Activated CD4-positive, alpha-beta memory T cell treated with anti-CD3 and anti-CD28 coated beads for 36 hours (primary cell): ENCODE measurements at regions of chr10 and their contacts with region 1.

Region 1: DNA sequence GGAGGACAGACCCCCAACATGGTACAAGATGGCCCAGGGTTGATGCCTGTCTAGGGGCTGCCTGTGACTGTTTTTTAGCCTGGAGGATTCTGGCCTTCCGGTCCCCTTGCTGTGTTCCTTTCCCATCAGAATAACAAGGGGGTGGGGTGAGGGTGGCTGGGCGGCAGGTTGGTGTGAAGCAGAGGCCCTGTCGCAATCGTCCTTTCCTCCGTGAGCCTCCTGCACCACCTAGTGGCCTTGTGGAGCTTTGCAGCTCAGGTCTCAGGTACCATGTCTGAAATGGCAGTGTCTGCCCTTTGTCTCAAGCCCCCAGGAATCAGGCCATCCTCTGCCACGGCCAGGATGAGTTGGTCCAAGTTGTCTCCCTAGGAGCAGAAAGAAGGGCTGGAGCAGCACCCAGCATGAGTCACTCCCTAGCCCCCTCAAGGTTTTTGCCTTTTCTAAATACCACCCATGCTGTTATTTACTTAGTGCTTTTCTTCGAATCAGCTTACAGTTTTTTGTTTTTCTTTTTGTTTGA is 24.2 kb downstream of the TACR2 start:
- DNase-seq: peak; percentile 89
- H3K4me3 Mint-ChIP-seq: no peak overlapping the region
- H3K27ac Mint-ChIP-seq: peak overlapping the region; percentile 67
- H3K4me1 Mint-ChIP-seq: peaks cover 11% of the 10 kb centered on the region
- H3K27me3 Mint-ChIP-seq: no peaks in the 10 kb centered on the region

Region 2: DNA sequence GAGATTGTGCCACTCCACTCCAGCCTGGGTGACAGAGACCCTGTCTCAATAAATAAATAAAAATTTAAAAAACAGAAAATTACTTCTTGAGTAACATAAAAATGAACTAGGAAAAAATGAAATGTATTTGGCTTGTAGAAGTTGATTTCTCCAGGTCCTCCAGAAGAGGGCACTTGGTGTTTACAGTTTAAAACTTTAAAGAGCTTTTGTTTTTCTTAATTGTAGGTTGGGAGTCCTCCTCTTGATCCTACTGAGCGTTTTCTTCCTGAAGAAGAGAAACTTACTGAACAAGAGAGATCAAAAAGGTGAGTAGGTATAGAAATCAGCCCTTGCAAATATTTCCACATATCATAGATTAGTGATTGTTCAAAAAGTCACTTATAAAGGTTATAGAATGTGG is 387.7 kb before region 1 on chr10:
- CTCF ChIA-PET with region 1: interaction called, 6 read pairs
- POLR2A ChIA-PET with region 1: no interaction called
- intact Hi-C with region 1: loop called (anchors 5 kb)
- DNase-seq: no peak
- H3K4me3 Mint-ChIP-seq: no peak overlapping the region
- H3K27ac Mint-ChIP-seq: no peak overlapping the region
- H3K4me1 Mint-ChIP-seq: peaks cover 15% of the 10 kb centered on the region
- H3K27me3 Mint-ChIP-seq: no peaks in the 10 kb centered on the region

Region 3: GRCh38 chr10:69237528-69238159 is 154.9 kb before region 1 on chr10:
- CTCF ChIA-PET with region 1: interaction called, 118 read pairs
- POLR2A ChIA-PET with region 1: no interaction called
- intact Hi-C with region 1: loop called (anchors 1 kb)
- DNase-seq: peak; percentile 93
- H3K4me3 Mint-ChIP-seq: no peak overlapping the region
- H3K27ac Mint-ChIP-seq: no peak overlapping the region
- H3K4me1 Mint-ChIP-seq: peaks cover 23% of the 10 kb centered on the region
- H3K27me3 Mint-ChIP-seq: no peaks in the 10 kb centered on the region